ENCODE measurements at regions of chr5 and their contacts with region 1.

Region 1: DNA sequence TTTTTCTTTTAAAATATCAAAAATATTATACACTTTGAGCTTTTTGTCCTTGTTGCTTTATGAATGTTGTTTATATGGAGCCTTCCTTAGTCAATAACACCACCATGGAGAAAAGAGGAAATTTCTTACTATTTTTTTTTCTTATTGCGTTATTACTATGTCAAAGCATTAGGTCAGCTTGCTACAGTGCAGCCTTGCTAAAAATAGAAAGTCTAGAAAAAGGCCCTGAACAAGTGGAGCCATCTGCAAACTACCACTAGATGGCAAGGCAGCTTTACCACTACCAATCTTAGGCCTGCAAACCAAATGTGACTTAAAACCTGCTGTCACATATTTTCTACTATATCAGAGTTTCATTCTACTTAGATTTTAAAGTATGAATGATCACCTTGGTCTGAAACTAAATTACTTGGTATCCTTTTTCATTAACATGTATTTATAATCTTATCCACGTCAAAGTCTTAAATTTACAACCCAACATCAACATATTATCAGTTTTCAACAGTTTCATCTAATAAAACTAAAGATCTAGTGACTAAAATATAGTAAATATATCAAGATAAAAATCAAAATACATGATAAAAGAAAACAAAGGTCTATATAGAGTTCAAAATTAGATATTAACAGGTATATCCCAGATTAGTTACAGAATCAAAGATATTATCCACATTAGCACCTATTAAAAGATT is 113.1 kb upstream of the ACOT12 start:
- DNase-seq: peak; percentile 80
- H3K4me3 Mint-ChIP-seq: no peak overlapping the region
- H3K27ac Mint-ChIP-seq: no peak overlapping the region
- H3K4me1 Mint-ChIP-seq: peaks cover 6% of the 10 kb centered on the region
- H3K27me3 Mint-ChIP-seq: no peaks in the 10 kb centered on the region

Region 2: DNA sequence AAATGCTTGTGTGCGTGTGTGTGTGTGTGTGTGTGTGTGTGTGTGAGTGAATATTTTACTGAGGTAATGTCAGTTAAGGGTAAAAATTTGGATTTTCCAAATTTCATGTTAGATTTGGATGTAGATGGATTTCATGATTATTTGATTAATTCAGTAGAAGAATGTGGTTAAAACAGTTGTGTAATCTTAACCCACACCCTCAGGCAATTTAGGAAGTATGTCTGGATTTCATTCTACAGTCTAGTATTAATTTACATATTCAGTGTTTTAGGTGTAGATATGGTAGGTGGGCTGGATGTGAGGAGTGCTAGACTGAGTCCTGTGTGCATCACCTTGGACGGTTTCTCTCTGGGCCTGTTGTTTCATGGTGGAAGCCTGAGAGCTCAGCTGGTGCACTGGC is 373.0 kb before region 1 on chr5:
- intact Hi-C with region 1: no loop called
- DNase-seq: no peak
- H3K4me3 Mint-ChIP-seq: no peak overlapping the region
- H3K27ac Mint-ChIP-seq: no peak overlapping the region
- H3K4me1 Mint-ChIP-seq: peaks cover 2% of the 10 kb centered on the region
- H3K27me3 Mint-ChIP-seq: no peaks in the 10 kb centered on the region

Region 3: GRCh38 chr5:81425569-81425968 is 81.5 kb before region 1 on chr5:
- intact Hi-C with region 1: loop called (anchors 5 kb)
- DNase-seq: no peak
- H3K4me3 Mint-ChIP-seq: no peak overlapping the region
- H3K27ac Mint-ChIP-seq: no peak overlapping the region
- H3K4me1 Mint-ChIP-seq: peaks cover 20% of the 10 kb centered on the region
- H3K27me3 Mint-ChIP-seq: no peaks in the 10 kb centered on the region

Region 4: DNA sequence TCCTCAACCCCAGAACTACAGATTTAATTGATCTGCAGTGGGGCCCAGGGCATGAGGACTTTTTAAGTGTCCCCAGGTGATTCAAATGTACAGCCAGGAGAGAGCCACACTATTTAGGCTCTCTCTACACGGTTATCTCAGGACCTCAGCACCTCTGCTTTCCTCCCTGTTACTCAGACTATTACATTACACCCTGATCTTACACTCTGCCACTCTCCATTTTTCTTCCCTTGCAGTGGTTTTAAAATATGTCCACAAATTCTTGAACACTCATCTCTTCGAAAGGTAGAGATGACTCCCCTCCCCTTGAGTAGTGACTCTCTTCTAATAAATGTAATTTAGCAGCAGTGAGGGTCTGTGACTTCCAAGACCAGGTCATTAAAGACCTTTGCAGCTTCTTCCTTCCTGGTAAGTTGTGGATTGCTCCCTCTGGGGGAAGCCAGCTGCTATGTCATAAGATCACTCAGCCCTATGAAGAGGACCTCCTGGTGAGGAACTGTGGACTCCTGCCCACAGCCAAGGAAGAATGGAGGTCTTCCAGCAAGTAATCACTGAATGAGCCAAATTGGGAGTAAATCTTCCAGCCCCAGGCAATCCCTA is 331.4 kb after region 1 on chr5:
- intact Hi-C with region 1: loop called (anchors 5 kb)
- DNase-seq: peak; percentile 77
- H3K4me3 Mint-ChIP-seq: no peak overlapping the region
- H3K27ac Mint-ChIP-seq: no peak overlapping the region
- H3K4me1 Mint-ChIP-seq: peaks cover 3% of the 10 kb centered on the region
- H3K27me3 Mint-ChIP-seq: no peaks in the 10 kb centered on the region

Region 5: GRCh38 chr5:82165740-82166530 is 658.9 kb after region 1 on chr5:
- intact Hi-C with region 1: loop called (anchors 2 kb)
- DNase-seq: peak; percentile 76
- H3K4me3 Mint-ChIP-seq: no peak overlapping the region
- H3K27ac Mint-ChIP-seq: no peak overlapping the region
- H3K4me1 Mint-ChIP-seq: peaks cover 5% of the 10 kb centered on the region
- H3K27me3 Mint-ChIP-seq: no peaks in the 10 kb centered on the region

Region 6: GRCh38 chr5:82225525-82226172 is 718.6 kb after region 1 on chr5:
- intact Hi-C with region 1: loop called (anchors 1 kb)
- DNase-seq: peak; percentile 90
- H3K4me3 Mint-ChIP-seq: no peak overlapping the region
- H3K27ac Mint-ChIP-seq: no peak overlapping the region
- H3K4me1 Mint-ChIP-seq: peaks cover 3% of the 10 kb centered on the region
- H3K27me3 Mint-ChIP-seq: peaks cover 5% of the 10 kb centered on the region